ENCODE measurements at regions of chr6 and their contacts with region 1.

Region 1: GRCh38 chr6:138428944-138429598 is 25.0 kb downstream of the HEBP2 start:
- DNase-seq: no peak

Region 2: GRCh38 chr6:138455746-138456400 is 26.8 kb after region 1 on chr6:
- intact Hi-C with region 1: loop called in 1 of 2 experiments (anchors 1 kb)
- DNase-seq: no peak

Region 3: DNA sequence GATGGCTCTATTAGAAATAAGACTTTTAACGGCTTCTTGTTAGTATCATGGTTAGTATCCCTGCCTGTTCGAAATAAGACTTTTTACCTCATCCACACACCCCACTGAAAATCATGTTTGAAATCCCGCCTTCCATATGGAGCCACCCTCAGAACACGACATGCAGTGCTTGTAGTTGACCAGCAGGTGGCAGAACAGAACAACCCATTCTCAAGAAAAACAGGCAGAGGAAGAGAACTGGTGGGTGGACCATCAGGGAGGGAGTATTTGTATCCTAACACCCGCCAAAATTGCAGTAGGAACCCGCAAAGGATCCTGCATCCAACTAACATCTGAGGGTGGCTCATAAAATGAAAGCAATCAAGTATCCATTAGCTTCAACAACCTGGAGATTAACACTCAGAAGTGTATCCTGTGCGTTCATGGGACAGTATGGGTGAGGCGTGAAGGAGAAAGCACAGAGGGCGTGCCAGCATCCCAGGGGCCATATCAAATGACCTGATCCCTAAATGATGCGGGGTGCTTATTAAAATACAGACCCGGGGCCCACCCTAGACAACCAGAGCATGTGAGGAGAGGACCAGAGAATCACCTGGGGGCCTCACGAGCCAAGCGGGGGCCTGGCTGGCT is 159.8 kb after region 1 on chr6:
- intact Hi-C with region 1: loop called in 1 of 2 experiments (anchors 5 kb)
- DNase-seq: no peak

Region 4: DNA sequence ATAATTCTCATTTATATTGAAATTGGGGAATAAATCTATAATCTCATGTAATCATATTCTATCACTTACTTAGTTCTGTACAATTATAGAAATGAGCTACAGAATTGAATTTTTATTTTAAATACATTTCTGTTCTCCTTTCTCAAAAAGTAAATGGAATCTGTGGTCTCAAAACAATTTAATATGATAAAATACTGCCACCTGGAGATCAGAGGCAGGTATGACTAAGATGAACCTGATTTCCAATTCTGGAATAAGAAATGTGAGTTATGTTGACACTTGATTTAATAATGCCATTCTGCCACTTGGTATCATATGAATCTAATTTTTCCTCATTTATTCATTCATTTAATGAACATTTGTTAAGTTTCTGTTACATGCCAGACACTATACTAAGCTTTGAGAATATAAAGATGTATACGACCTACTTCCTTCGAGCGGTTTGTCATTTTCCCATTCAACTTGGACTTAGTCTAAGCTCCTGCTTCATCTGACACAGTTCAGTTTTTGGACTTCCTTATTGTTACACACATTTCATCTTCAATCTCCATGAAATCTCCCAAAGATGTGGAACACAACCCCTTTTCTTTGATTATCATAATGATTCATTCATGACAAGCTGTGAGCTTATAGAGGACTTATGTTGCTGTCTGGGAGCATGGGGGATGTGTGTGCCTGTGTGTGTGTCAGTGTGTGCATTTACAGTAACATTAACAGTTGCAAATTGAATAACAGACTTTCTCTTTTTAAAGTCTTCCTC is 337.0 kb after region 1 on chr6:
- intact Hi-C with region 1: loop called in 1 of 2 experiments (anchors 10 kb)
- DNase-seq: no peak

Measured in posterior vena cava (tissue), 2 donors.